B cell (primary cell): ENCODE measurements at regions of chr2 and their contacts with region 1.

Region 1: DNA sequence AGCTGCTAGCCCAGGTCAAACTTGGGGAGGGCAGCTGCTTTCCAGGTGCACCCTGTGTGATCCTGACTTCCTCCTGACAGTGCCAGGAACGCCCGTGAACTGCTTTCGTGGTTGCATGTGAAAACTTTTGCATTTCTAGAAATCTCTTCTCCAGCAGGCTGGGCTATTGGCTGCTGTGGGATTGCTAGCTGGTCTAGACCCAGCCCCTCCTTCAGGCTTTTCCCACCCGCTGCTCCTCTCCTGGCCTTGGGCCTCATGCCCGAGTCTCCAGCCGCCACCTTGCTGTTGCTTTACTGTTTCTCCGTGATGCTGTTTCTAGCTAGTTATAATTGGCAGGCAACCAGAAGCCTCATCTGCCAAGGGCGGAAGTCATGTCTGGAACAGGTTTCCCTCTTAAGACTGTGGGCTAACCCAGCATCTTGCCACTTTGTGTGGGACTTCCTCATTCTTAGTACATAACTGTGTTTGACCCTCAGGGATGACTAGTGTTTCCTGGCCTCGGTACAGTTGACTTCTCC is 27.0 kb upstream of the MGAT4A start:
- DNase-seq: peak; percentile 81
- ATAC-seq: peak; percentile 91
- H3K4me3 ChIP-seq: peak overlapping the region in 4 of 5 experiments; percentile 5 to 42 (median 31)
- H3K4me3 Mint-ChIP-seq: peak overlapping the region; percentile 76
- H3K27ac ChIP-seq: peak overlapping the region; percentile 38 to 70
- H3K27ac Mint-ChIP-seq: peak overlapping the region; percentile 81
- H3K4me1 ChIP-seq: peaks cover 57 to 60% of the 10 kb centered on the region in 2 donors
- H3K4me1 Mint-ChIP-seq: peaks cover 51% of the 10 kb centered on the region
- H3K27me3 ChIP-seq: no peaks in the 10 kb centered on the region
- H3K27me3 Mint-ChIP-seq: no peaks in the 10 kb centered on the region
- CTCF ChIP-seq: no peak

Region 2: DNA sequence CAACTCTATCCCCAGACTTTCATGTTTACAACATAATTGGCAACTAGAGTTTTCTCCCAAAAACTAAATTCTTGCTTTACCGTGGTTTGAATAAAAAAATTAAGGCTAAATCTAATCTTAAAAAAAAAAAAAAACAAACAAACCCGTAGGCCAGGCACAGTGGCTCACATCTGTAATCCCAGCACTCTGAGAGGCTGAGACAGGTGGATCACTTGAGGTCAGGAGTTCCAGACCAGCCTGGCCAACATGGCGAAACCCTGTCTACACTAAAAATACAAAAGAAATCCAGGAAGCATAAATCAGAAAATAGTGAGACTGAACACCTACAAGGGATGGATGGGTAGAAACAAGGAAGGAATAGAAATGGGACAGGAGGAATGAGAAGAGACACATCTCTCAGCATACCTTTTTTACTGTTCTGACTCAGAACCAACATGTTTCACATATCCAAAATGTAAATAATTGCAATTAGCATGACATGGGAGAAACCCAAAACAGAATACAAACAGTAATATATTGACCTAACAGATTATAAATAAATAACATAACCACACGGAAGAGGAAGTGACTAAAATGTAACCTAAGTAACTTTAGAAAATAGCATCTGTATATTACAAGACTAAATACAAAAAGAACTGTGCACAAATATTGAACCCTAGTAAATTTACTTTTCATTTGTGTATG is 44.5 kb before region 1 on chr2:
- CTCF ChIA-PET with region 1: no interaction called
- POLR2A ChIA-PET with region 1: no interaction called
- intact Hi-C with region 1: loop called (anchors 5 kb)
- DNase-seq: no peak
- ATAC-seq: peak; percentile 20
- H3K4me3 ChIP-seq: peak overlapping the region in 1 of 5 experiments; percentile 27
- H3K4me3 Mint-ChIP-seq: peak overlapping the region; percentile 44
- H3K27ac ChIP-seq: no peak overlapping the region
- H3K27ac Mint-ChIP-seq: peak overlapping the region; percentile 80
- H3K4me1 ChIP-seq: peaks cover 38 to 46% of the 10 kb centered on the region in 2 donors
- H3K4me1 Mint-ChIP-seq: peaks cover 72% of the 10 kb centered on the region
- H3K27me3 ChIP-seq: no peaks in the 10 kb centered on the region
- H3K27me3 Mint-ChIP-seq: no peaks in the 10 kb centered on the region
- CTCF ChIP-seq: no peak

Region 3: DNA sequence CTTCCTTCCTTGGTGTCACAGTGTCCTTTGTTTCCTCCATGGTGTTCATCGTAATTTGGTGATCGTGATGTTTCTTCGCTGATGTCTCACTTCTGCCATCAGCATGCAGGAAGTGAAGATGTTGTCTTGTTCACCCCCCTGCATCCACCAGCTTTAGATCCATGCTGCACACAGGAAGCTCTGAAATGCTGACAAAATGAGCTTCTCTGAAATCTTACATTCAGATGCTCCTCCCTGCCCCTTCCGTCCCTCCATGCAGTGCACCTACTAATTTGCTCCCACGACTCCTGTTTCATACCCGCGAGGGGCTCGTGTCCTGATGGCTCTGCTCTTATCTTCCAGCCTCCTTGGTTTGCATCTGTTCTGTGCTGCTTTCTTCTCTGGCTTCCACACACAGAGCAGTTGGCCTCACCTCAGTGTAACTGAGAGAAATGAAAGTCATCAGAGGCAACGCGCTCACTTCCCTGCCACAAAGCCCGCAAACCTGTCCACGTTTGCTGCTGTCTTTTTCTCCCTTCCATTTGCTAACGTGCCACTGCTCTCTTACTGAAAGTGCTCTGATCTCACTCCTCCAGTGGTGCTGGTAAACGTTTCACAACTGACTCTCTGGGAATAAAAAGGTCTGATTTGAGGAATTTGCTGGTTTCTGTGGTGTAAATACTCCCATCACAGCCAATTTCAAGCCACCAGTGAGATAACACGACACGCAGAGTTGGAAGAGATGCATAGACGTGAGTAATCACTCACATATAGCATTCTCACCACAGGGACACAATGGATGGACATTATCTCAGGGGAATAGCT is 14.0 kb after region 1 on chr2:
- CTCF ChIA-PET with region 1: no interaction called
- POLR2A ChIA-PET with region 1: no interaction called
- intact Hi-C with region 1: no loop called
- DNase-seq: peak; percentile 54
- ATAC-seq: peak; percentile 70
- H3K4me3 ChIP-seq: peak overlapping the region; percentile 16 to 62 (median 24)
- H3K4me3 Mint-ChIP-seq: peak overlapping the region; percentile 82
- H3K27ac ChIP-seq: peak overlapping the region; percentile 14 to 17
- H3K27ac Mint-ChIP-seq: peak overlapping the region; percentile 74
- H3K4me1 ChIP-seq: peaks cover 19 to 29% of the 10 kb centered on the region in 2 donors
- H3K4me1 Mint-ChIP-seq: peaks cover 32% of the 10 kb centered on the region
- H3K27me3 ChIP-seq: peaks cover 0 to 22% (median 0%) of the 10 kb centered on the region in 4 experiments
- H3K27me3 Mint-ChIP-seq: peaks cover 7% of the 10 kb centered on the region
- CTCF ChIP-seq: no peak